Activated CD4-positive, alpha-beta memory T cell treated with anti-CD3 and anti-CD28 coated beads, Interleukin-2, amount 10 ng/mL, durations not matched to agents 7 days and 5 days (primary cell): ENCODE measurements at regions of chr20 and their contacts with region 1.

Region 1: DNA sequence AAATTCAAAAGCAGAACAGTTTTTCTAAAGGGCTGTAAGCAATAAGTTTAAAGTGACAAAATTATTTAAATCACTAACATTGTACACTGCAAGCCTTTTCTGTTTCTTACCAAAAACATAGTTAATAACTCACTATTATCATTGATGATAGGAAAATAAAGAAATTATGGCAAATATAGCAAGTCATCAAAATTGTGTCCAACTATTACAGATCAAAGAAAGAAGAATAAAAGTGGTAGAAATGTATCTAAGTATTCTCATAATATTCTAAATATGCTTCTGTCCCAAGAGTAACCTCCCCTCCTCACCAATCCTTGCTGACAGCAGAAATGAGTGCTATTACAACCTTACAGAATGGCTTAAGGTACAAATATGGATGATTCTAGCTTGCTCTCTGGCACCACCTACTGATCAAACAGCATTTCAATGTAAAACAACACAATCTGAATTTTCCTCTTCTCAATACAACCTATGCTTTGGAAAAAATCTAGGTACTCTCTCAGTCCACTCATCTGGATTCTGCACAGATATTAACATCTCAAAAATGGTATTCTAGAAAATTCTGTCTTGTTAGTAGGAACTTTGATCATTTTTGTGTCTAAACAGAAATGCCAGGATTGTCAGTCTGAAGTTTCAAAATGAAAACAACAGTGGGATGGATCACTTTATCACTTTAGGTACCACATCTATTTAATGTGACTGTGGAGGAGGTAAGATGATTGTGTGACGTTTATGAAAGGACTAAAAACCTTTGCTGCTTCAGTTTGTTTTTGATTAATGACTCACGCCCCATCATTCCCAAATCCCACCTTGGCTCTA is 40.9 kb downstream of the ZFP64 start:
- DNase-seq: no peak
- H3K4me3 Mint-ChIP-seq: no peak overlapping the region
- H3K27ac Mint-ChIP-seq: no peak overlapping the region
- H3K4me1 Mint-ChIP-seq: no peaks in the 10 kb centered on the region
- H3K27me3 Mint-ChIP-seq: no peaks in the 10 kb centered on the region

Region 2: DNA sequence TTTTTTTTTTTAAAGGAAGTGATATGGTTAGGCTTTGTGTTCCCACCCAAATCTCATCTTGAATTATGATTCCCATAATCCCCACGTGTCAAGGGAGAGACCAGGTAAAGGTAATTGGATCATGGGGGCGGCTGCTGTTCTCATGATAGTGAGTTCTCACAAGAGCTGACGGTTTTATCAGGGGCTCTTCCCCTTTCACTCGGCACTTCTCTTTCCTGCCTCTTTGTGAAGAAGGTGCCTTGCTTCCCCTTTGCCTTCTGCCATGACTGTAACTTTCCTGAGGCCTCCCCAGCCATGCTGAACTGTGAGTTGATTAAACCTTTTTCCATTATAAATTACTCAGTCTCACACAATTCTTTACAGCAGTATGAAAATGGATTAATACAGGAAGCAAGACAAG is 23.3 kb before region 1 on chr20:
- CTCF ChIA-PET with region 1: interaction called, 16 read pairs
- POLR2A ChIA-PET with region 1: no interaction called
- DNase-seq: no peak
- H3K4me3 Mint-ChIP-seq: no peak overlapping the region
- H3K27ac Mint-ChIP-seq: no peak overlapping the region
- H3K4me1 Mint-ChIP-seq: no peaks in the 10 kb centered on the region
- H3K27me3 Mint-ChIP-seq: no peaks in the 10 kb centered on the region

Region 3: DNA sequence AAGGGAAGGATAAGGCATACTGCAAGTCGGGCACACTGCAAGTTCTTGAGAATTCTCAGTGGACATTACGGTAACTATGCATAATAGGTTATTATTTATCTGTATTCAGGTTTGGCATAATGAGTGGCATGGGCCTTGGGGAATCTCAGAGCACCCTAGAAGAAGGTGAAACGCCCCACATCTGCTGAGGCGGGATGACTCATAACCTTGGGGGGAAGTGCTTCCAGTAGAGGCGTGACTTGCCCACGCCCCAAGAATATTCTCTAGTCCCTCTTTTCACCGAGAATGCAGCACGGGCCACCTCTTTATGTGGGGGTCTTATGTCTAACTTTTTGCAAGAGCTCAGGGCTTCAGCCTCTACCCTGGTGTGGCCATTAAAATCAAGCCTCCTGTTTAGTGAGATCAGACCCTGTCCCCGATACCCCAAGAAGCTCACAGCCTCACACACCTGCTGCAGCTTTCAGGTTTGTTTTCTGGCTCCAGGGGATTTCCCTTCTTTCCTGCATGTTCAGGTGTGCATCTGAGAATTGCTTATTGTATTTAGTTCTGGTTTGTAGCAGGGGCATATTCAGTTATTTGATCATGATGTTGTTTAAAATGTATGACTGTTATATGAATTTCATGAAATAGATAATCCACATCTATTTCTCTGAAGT is 21.9 kb after region 1 on chr20:
- CTCF ChIA-PET with region 1: no interaction called
- POLR2A ChIA-PET with region 1: no interaction called
- DNase-seq: no peak
- H3K4me3 Mint-ChIP-seq: no peak overlapping the region
- H3K27ac Mint-ChIP-seq: no peak overlapping the region
- H3K4me1 Mint-ChIP-seq: peaks cover 12% of the 10 kb centered on the region
- H3K27me3 Mint-ChIP-seq: no peaks in the 10 kb centered on the region

Region 4: GRCh38 chr20:52364405-52364804 is 213.8 kb after region 1 on chr20:
- CTCF ChIA-PET with region 1: no interaction called
- POLR2A ChIA-PET with region 1: no interaction called
- DNase-seq: no peak
- H3K4me3 Mint-ChIP-seq: no peak overlapping the region
- H3K27ac Mint-ChIP-seq: no peak overlapping the region
- H3K4me1 Mint-ChIP-seq: no peaks in the 10 kb centered on the region
- H3K27me3 Mint-ChIP-seq: no peaks in the 10 kb centered on the region